ENCODE measurements at regions of chr4 and their contacts with region 1.

Region 1: DNA sequence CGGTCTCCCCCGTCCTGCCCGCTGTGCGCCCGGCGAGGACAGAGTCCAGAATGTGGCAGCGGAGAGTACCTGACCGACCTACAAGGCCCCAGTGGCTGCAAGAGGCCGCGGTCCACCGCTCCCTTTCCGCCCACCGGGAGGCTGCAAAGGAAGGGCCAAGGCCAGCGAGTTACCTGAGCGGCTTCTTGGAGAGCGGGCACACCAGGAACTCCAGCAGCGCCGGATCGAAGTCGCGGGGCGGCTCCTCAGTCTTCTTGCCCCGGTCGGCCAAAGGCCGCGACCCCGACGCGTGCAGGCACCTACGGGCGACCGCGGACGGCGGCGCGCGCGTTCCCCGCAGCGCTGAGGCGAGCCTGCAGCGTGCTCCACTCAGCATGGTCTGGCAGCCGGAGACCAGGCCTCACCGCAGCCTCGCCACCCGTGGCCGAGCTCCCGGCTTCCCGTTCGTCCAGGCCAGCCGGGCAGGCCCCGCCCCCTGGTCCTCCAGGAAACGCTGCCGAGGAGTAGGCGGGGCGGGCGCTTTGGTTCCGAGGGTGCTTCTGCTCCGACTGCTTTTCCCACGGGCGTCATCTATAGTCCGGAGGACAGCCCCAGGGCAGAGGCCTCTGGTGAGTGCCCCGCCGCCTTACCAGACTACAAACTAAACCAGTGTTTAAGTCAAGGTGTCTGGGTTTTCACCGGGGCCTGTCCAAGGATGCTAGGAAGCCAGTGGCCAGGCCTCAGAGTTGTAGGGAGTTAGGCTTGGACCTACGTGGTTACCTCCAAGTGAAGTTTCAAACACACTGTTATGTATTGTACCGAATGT is at the start of gene PYURF:
- DNase-seq: peak; percentile 98
- H3K4me3 ChIP-seq: peak within 1 kb of the TSS; percentile 71 to 87 (median 74)
- H3K27ac ChIP-seq: peak within 1 kb of the TSS; percentile 90 to 97 (median 94)
- H3K4me1 ChIP-seq: peaks cover 0 to 59% (median 20%) of the 10 kb centered on the region in 4 donors
- H3K27me3 ChIP-seq: no peaks in the 10 kb centered on the region
- CTCF ChIP-seq: no peak
- EP300 ChIP-seq: no peak
- POLR2A ChIP-seq: peak; percentile 55 to 77
- total RNA-seq, gene PYURF: 73.1 to 127 (median 111) TPM

Region 2: DNA sequence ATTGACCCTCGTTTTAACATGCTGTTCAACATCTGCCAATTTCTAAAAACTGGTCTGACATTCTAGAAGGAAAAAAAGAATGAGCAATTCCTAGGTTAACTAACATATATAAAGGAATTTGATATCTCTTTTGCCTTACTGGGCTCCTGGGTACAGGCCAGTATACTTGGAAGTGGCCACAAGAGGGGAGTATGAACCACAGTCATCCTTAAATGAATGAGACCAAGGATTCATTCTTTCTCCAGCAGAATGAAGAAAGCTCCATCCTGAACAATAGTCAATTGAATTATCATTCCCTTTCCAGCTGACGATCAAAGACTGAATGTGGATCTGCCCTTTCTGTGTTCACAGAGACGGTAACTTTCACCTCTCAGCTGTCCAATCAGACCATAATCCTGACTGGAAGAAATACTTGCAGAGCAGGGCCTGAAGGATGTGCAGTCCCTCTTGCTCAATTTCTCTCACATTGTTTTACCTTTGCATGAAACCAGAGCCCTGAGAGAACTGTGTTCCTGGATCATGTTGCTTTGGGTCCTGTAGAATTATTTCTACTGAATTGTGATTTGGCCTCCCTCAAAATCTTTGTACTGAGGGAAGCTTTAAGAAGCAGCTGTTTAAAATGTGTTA is 979.6 kb before region 1 on chr4:
- intact Hi-C with region 1: loop called (anchors 10 kb)
- DNase-seq: no peak
- H3K4me3 ChIP-seq: no peak overlapping the region
- H3K27ac ChIP-seq: peak overlapping the region in 2 of 4 donors; percentile 22 to 92
- H3K4me1 ChIP-seq: peaks cover 0 to 28% (median 24%) of the 10 kb centered on the region in 4 donors
- H3K27me3 ChIP-seq: no peaks in the 10 kb centered on the region
- CTCF ChIP-seq: peak; percentile 33 to 66 (median 48)
- EP300 ChIP-seq: no peak
- POLR2A ChIP-seq: no peak

Region 3: DNA sequence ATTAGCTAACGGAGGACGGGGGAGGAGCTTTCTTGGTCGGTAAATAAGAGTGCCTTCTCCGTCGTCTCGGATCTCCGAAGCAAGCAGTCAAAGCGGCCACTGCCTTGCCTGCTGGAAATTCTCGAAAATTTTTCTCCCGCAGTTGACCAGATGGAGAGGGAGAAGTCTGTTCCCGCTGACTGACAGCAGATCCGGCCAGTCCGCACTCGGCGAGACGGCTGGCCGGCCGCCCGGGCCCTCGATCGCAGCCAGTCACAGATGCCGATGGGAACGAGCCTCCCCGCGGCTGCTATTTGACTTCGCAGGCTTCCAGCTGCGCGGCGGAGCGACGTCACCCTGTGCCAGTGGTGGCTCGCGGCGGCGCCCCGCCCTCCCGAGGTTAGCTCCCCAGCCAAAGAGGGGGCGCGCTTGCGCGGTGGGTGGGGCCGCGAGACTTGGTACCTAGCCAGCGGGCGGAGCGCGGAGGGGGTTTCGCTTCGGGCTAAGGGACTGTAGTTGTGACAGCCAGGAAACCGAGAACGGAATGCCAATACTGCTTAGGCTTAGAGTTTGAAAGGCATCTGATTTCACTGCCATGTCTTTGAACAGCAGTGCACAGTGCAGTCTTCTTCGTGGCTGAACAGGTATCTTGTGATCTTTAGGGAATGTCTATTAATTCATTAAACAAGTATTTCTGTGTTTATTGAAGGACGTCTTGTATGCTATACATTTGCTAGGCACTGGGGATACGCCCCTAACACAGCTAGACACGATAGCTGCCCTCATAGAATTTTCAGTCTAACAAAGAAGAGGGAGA is 238.9 kb before region 1 on chr4 and contains the start of gene PPM1K:
- intact Hi-C with region 1: loop called (anchors 1 kb)
- DNase-seq: peak; percentile 100
- H3K4me3 ChIP-seq: peak within 1 kb of the TSS; percentile 64 to 74 (median 70)
- H3K27ac ChIP-seq: peak within 1 kb of the TSS; percentile 93 to 99 (median 96)
- H3K4me1 ChIP-seq: peaks cover 0 to 28% (median 12%) of the 10 kb centered on the region in 4 donors
- H3K27me3 ChIP-seq: no peaks in the 10 kb centered on the region
- CTCF ChIP-seq: no peak
- EP300 ChIP-seq: peak in 2 of 4 donors; percentile 26 to 64
- POLR2A ChIP-seq: peak; percentile 82 to 87
- total RNA-seq, gene PPM1K: 12.6 to 16.8 (median 15.4) TPM

Region 4: GRCh38 chr4:88456757-88457306 is 66.7 kb before region 1 on chr4 and contains the start of gene HERC5:
- intact Hi-C with region 1: loop called (anchors 5 kb)
- DNase-seq: peak; percentile 94
- H3K4me3 ChIP-seq: peak within 1 kb of the TSS; percentile 49 to 80 (median 62)
- H3K27ac ChIP-seq: peak within 1 kb of the TSS; percentile 75 to 85 (median 82)
- H3K4me1 ChIP-seq: peaks cover 0 to 9% (median 2%) of the 10 kb centered on the region in 4 donors
- H3K27me3 ChIP-seq: no peaks in the 10 kb centered on the region
- CTCF ChIP-seq: peak; percentile 58 to 67 (median 64)
- EP300 ChIP-seq: peak in 1 of 4 donors; percentile 7
- POLR2A ChIP-seq: peak in 1 of 2 donors; percentile 11
- total RNA-seq, gene HERC5: 4.8 to 7.5 (median 6.0) TPM

Region 5: DNA sequence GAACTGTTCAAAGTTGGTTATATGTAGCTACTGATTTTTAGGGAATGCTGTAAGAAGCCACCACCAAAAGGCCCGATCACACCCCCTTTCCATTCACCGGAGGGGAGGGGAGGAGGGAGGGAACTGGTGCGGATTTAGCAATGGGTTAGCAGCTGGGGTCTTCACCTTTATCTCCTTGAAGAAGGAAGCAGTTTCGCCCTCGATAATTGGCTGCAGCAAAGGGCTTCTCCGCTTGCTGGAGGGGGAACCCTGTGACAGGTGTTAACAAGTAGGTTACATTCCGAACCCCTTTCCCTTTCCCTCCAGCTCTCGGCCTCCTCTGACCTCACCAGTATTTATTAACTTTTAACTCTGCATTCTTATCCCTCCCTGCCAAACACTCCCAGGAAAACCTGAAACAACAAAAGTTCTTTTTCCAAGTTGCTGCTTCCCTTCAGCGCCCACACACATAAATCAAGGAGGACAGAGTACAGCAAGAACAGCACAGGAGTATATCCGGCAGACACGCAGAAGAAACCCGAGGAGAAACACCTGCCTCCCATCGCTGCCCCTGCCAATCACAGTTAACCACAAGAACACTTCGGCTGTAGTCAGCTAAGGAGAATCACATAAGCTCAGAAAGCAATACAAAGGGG is 213.9 kb after region 1 on chr4:
- intact Hi-C with region 1: no loop called
- DNase-seq: peak; percentile 82
- H3K4me3 ChIP-seq: no peak overlapping the region
- H3K27ac ChIP-seq: peak overlapping the region; percentile 50 to 71 (median 59)
- H3K4me1 ChIP-seq: peaks cover 0 to 36% (median 32%) of the 10 kb centered on the region in 4 donors
- H3K27me3 ChIP-seq: no peaks in the 10 kb centered on the region
- CTCF ChIP-seq: no peak
- EP300 ChIP-seq: no peak
- POLR2A ChIP-seq: no peak

Region 6: GRCh38 chr4:88823058-88823919 is 299.8 kb after region 1 on chr4:
- intact Hi-C with region 1: loop called (anchors 5 kb)
- DNase-seq: peak; percentile 97
- H3K4me3 ChIP-seq: peak overlapping the region; percentile 43 to 60 (median 52)
- H3K27ac ChIP-seq: peak overlapping the region; percentile 82 to 92 (median 88)
- H3K4me1 ChIP-seq: peaks cover 0 to 43% (median 35%) of the 10 kb centered on the region in 4 donors
- H3K27me3 ChIP-seq: no peaks in the 10 kb centered on the region
- CTCF ChIP-seq: no peak
- EP300 ChIP-seq: peak in 2 of 4 donors; percentile 6 to 65
- POLR2A ChIP-seq: peak; percentile 49 to 75